ENCODE measurements at regions of chr10 and their contacts with region 1.

Region 1: DNA sequence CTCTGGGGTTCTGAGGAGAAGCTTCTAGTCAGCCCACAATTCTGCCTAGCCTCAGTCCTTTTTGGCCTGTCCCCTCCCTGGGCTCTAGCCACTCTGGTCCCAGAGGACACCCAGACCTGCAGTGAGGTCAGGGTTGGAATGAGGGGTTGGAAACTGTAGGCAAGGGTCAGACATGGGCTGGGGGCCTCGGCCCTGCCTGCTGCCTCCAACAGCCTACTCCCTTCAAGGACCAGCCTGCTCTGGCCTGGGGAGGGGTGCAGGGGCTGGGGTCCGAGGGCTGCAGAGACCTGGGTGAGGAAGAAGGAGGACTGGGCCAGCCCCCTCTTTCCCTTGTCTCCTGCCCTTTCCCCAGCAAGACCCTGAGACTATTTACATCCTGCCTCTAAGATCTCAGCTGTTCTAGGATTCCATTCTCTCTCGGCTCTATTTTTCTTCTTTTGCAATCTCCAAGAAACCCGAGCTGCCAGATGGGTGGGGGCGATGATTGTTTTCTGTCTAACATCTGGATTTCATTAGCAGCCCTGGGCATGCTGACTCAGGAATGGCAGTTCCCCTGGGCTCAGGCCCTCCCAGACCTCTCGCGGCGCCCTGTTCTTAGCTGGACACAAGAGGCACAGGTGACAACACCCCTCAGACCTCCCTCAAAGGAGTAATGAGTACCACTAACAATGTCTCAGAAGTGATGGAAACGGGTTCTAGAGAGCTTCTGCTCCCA is 23.1 kb downstream of the ZCCHC24 start:
- DNase-seq: peak; percentile 91
- H3K4me3 ChIP-seq: peak overlapping the region; percentile 32; the same call in 1 of the 2 replicates
- H3K27ac ChIP-seq: peak overlapping the region; percentile 89
- H3K27me3 ChIP-seq: no peaks in the 10 kb centered on the region
- CTCF ChIP-seq: no peak

Region 2: DNA sequence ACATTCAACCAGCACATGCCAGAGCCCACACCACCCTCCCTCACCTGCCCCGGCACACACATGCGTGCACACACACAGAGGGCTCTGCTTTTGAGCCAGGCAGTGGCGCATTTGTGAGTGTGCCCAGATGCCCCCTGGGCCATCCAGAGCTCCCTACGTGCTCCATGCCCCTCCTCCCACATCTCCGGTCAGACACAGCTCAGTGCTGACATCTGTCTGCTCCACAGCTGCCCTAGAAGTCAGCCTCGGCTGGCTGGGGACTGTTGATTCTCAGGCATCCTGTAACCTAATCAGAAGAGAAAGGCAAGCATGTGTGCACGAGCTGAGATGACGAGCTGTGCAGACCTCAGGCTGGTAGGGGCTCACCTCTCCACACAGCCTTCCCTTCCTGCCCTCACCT is 218.5 kb before region 1 on chr10:
- CTCF ChIA-PET with region 1: no interaction called
- POLR2A ChIA-PET with region 1: no interaction called
- DNase-seq: no peak
- H3K4me3 ChIP-seq: no peak overlapping the region
- H3K27ac ChIP-seq: no peak overlapping the region
- H3K27me3 ChIP-seq: no peaks in the 10 kb centered on the region
- CTCF ChIP-seq: no peak

Region 3: GRCh38 chr10:79331709-79332108 is 90.6 kb before region 1 on chr10:
- CTCF ChIA-PET with region 1: no interaction called
- POLR2A ChIA-PET with region 1: no interaction called
- DNase-seq: peak; percentile 37
- H3K4me3 ChIP-seq: no peak overlapping the region
- H3K27ac ChIP-seq: peak overlapping the region; percentile 21
- H3K27me3 ChIP-seq: no peaks in the 10 kb centered on the region
- CTCF ChIP-seq: no peak

Region 4: DNA sequence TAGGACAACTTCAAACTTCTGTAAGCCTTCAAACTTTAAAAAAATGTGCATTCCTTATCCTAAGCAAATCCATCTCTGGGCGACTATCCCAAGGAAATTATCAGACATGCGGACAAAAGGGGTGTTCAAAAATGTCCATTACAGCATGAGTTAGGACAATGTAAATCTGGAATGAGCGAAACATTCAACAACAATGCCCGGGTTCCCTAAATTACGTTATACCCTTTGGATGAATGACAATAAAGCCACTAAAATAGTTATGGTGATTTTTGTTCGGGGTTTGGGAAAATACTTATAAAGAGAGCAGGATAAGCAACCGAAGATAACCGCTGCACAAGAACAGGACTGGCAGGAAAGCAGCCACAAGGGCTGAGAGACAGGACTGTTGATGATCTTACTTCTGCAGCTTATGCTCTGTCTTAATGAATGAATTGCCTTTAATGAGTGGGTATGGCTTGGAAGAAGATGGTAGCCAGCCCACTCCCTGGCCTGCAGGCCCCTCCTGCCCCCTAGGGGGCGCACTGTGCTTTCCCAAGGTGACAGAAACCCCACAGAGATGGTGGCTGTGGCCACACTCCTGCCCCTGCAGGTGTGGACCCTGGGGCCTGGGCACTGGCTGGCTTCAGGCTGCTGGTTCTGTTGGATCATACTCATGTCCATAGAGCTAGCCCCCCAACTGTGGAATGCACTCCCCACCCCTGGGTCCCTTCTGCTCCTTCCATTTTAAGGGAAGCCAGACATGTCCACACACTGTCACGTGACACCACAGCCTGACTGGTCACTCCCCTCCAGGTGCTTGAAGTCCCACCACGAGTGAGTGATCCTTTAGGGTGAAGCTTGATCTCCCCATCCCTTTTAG is 22.0 kb before region 1 on chr10:
- CTCF ChIA-PET with region 1: interaction called, 4 read pairs
- POLR2A ChIA-PET with region 1: interaction called, 10 read pairs
- DNase-seq: no peak
- H3K4me3 ChIP-seq: no peak overlapping the region
- H3K27ac ChIP-seq: peak overlapping the region; percentile 100
- H3K27me3 ChIP-seq: no peaks in the 10 kb centered on the region
- CTCF ChIP-seq: peak; percentile 71

Region 5: DNA sequence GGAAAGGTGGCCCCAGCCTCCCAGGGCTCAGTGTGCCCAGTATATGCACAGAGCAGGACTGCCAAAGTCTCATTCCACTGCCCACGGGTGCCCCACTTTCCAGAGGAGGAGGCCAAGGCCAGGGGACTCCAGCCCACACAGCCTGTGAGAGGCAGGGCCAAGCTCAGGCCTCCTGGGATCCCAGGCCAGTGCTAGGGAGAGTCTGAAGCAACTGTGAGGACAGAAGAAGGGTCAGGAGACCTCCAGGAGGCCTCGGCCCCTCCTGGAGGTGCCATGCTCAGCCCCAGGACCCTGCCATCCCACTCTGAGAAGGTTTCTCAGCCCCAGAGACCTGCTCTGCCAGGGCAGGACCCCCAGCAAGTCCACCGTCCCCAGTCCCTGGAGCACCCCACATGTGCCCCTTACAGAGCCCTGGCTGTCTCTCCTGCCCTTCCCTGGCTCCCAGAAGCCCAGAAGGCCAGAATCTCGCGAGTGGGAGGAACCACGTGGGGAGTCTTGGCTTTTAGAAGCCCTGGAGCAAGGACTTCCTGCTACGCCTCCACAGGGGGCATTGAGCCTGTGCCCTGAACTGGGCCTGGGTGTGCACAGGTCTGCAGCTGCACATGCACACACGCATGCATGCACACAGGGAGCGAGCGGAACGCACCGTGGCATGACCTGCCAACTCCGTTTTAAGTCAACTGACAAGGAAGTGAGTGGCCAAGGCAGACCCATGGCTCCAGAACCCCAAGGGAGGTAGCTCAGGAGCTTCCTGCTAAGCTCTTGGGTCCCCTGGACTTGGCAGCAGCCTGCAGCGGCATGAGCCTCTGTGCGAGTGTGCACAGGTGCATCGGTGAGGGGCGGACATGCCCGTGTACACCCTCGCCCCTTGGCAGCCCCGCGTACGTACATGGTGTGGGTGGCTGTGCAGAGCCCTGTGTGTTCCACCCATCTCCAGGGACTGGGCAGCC is 10.5 kb before region 1 on chr10:
- CTCF ChIA-PET with region 1: interaction called, 3 read pairs
- POLR2A ChIA-PET with region 1: interaction called, 12 read pairs
- DNase-seq: no peak
- H3K4me3 ChIP-seq: no peak overlapping the region
- H3K27ac ChIP-seq: no peak overlapping the region
- H3K27me3 ChIP-seq: no peaks in the 10 kb centered on the region
- CTCF ChIP-seq: no peak

Measured in AG04450 (cell line).